ENCODE measurements at regions of chr2 and their contacts with region 1.

Region 1: GRCh38 chr2:237072067-237072931 is 13.4 kb upstream of the COPS8 start:
- DNase-seq: peak; percentile 51
- ATAC-seq: no peak
- H3K4me3 ChIP-seq: no peak overlapping the region
- H3K27ac ChIP-seq: no peak overlapping the region
- H3K4me1 ChIP-seq: peaks cover 49% of the 10 kb centered on the region
- H3K27me3 ChIP-seq: no peaks in the 10 kb centered on the region
- CTCF ChIP-seq: peak; percentile 91
- EP300 ChIP-seq: no peak
- POLR2A ChIP-seq: no peak
- RAD21 ChIP-seq: peak; percentile 79

Region 2: DNA sequence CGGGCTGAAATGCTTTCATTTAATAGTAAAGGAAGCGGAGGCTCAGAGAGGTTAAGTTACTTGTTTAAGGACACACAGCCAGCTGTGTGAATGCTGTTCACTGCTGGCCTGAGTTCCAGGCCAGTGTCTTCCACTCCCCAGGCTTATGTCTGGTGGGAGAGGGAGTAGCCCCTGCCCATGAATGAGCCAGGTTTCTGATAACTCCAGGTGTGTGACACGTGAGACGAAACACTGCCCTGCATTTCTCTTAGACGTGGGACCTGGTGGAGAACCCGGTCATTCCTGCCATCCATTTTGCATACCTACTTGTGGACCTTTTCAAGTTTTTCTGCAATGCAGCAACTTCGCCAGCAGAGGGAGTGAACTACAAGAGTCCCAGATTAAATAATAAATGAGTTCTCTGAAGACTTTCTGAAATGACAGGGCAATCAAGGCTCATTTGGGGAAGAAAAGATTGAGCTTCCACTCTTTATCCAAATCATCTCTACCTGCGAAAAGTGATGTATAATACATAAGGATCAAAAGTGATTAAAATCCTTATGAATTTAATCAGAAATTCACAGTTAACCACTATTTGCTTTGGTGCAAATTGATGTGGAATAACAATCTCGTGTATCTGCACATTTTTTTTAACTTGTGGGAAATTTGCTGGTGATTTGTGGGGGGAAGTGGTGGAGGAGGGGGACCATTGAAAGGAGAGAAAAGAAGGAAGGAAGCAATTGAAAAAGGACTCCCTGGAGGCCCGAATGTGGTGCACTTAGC is 728.7 kb before region 1 on chr2:
- CTCF ChIA-PET with region 1: interaction called, 19 read pairs
- POLR2A ChIA-PET with region 1: no interaction called
- in situ Hi-C with region 1: no loop called
- intact Hi-C with region 1: loop called (anchors 1 kb)
- DNase-seq: peak; percentile 70
- ATAC-seq: peak; percentile 61
- H3K4me3 ChIP-seq: no peak overlapping the region
- H3K27ac ChIP-seq: no peak overlapping the region
- H3K4me1 ChIP-seq: no peaks in the 10 kb centered on the region
- H3K27me3 ChIP-seq: peaks cover 3 to 45% of the 10 kb centered on the region in 2 experiments; a peak in 4 of 5 replicates
- CTCF ChIP-seq: peak; percentile 71
- EP300 ChIP-seq: no peak
- POLR2A ChIP-seq: no peak
- RAD21 ChIP-seq: peak; percentile 39; the same call in 1 of the 2 replicates

Region 3: GRCh38 chr2:236352761-236353593 is 719.3 kb before region 1 on chr2:
- CTCF ChIA-PET with region 1: interaction called, 7 read pairs
- POLR2A ChIA-PET with region 1: no interaction called
- in situ Hi-C with region 1: loop called (anchors 5 kb)
- intact Hi-C with region 1: no loop called
- DNase-seq: no peak
- ATAC-seq: no peak
- H3K4me3 ChIP-seq: no peak overlapping the region
- H3K27ac ChIP-seq: no peak overlapping the region
- H3K4me1 ChIP-seq: no peaks in the 10 kb centered on the region
- H3K27me3 ChIP-seq: peaks cover 0 to 43% of the 10 kb centered on the region in 2 experiments; a peak in 4 of 5 replicates
- CTCF ChIP-seq: peak; percentile 72
- EP300 ChIP-seq: no peak
- POLR2A ChIP-seq: no peak
- RAD21 ChIP-seq: peak; percentile 55; the same call in 1 of the 2 replicates

Region 4: DNA sequence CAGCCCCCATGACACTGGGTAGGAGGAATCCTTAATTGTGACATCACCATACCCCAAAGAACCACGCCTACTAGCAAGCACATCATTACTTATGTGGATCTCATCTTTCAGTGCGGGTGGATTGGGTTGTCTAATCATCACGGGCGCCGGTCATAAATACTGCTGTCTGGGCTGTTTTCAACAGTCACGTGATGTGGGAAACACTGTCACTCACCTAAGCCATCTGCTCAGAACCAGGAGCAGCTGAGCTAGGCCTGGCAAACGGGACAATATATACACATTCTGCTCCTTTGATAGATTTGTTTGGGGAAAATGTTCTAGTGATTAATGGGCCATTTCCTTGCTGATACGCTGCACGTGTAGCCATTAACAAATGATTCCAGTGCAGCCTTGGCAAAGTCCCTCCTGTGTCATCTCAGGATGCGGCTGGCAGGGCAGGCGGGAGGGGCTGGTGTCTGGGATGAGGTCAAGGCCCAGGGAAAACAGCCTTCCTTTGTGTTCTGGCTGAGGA is 132.5 kb before region 1 on chr2:
- CTCF ChIA-PET with region 1: no interaction called
- POLR2A ChIA-PET with region 1: no interaction called
- in situ Hi-C with region 1: no loop called
- intact Hi-C with region 1: no loop called
- DNase-seq: no peak
- ATAC-seq: no peak
- H3K4me3 ChIP-seq: no peak overlapping the region
- H3K27ac ChIP-seq: no peak overlapping the region
- H3K4me1 ChIP-seq: no peaks in the 10 kb centered on the region
- H3K27me3 ChIP-seq: peaks cover 0 to 6% of the 10 kb centered on the region in 2 experiments; a peak in 3 of 5 replicates
- CTCF ChIP-seq: no peak
- EP300 ChIP-seq: no peak
- POLR2A ChIP-seq: no peak
- RAD21 ChIP-seq: no peak

Region 5: DNA sequence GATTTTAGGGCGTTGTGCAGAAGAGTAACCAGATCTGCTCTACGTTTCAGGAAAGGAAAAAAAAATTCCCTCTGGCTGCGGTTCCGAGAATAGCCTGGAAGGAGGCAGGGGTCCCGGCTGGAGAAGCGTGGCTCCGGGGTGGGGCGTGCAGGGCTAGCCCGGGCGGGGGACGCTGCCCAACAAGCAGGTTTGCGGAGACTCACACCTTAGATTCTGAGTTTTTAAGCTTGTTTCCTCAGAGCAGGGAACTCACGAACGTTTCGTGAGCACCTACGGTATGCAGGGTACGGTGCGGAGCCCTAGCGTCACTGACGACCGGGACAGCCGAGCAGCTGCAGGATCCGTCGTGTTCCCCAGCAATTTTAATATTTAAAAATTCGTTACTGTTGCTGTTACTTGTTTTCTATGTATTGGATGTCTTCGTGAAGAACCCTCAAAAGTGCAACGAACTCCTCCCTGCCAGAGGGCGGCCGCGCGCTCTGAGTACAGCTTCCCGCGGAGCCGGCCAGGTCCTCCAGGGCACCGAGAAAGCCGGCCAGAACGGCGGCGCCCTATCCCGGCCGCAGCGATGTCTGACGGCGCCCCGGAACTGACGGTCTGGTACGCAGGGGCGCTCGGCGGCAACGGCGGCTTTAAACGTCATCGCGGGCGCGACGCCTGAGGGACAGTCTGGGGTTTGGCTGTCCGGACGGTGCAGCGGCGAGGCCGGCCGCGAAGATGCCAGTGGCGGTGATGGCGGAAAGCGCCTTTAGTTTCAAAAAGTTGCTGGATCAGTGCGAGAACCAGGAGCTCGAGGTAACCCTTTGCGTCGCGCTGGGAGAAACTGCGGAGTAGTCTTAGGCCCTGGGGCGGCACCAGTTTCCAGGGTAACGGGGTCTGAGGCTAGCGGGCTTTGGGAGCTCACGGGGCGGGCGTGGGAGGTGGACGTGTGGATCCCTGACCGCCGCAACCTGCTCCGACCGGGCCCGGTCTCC is 13.2 kb after region 1 on chr2 and contains the start of gene COPS8:
- CTCF ChIA-PET with region 1: no interaction called
- POLR2A ChIA-PET with region 1: interaction called, 49 read pairs
- in situ Hi-C with region 1: no loop called
- intact Hi-C with region 1: loop called (anchors 1 kb)
- DNase-seq: peak; percentile 88
- ATAC-seq: peak; percentile 100
- H3K4me3 ChIP-seq: peak within 1 kb of the TSS; percentile 92 to 96 (median 93)
- H3K27ac ChIP-seq: peak within 1 kb of the TSS; percentile 86
- H3K4me1 ChIP-seq: peaks cover 48% of the 10 kb centered on the region
- H3K27me3 ChIP-seq: no peaks in the 10 kb centered on the region; a peak in 2 of 5 replicates
- CTCF ChIP-seq: peak; percentile 64
- EP300 ChIP-seq: peak in 1 of 2 experiments; percentile 75; a peak in 3 of 4 replicates
- POLR2A ChIP-seq: peak; percentile 91 to 95
- RAD21 ChIP-seq: peak; percentile 38; the same call in 1 of the 2 replicates
- total RNA-seq, gene COPS8: 96.6 and 154 TPM in 2 replicates

Region 6: DNA sequence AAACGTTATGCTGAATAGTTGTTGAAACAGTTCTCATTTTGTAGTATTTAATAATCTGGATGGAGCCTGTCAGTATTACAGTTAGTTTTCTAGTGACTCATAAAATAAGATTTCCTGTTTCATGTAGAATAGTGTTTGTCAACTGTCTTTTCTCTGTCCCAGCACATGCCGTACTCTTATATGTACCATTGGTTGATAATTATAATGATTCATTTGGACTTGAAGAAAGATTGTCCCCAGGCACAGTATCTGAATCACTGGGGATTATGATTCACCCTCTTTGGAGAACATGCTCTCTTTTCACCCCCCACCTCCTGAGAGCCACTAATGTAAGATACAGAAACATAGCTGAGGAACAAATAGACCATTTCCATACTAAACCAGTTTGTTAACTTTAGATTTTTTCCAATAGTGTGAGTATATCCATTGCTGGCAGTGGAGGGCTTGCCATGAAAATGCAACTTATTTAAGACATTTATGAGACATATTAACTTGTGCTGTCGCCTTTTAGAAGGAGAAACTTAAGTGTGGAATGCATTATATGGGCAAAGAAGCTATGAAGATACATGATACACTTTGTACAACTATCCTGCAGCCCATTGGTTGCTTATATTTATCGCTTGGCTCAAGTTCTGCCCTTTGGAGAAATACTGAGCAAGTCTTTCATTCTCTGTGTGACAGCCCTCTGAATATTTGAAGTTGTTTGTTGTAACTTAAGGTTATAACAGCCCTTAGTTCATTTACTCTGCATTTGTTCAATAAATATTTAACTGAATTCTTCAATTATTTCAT is 25.8 kb after region 1 on chr2:
- CTCF ChIA-PET with region 1: no interaction called
- POLR2A ChIA-PET with region 1: no interaction called
- in situ Hi-C with region 1: no loop called
- intact Hi-C with region 1: loop called (anchors 1 kb)
- DNase-seq: no peak
- ATAC-seq: no peak
- H3K4me3 ChIP-seq: no peak overlapping the region
- H3K27ac ChIP-seq: no peak overlapping the region
- H3K4me1 ChIP-seq: peaks cover 12% of the 10 kb centered on the region
- H3K27me3 ChIP-seq: no peaks in the 10 kb centered on the region
- CTCF ChIP-seq: no peak
- EP300 ChIP-seq: no peak
- POLR2A ChIP-seq: no peak
- RAD21 ChIP-seq: no peak

Measured in HepG2 (cell line).